Ovary (tissue), 10 donors: ENCODE measurements at regions of chr16 and their contacts with region 1.

Region 1: DNA sequence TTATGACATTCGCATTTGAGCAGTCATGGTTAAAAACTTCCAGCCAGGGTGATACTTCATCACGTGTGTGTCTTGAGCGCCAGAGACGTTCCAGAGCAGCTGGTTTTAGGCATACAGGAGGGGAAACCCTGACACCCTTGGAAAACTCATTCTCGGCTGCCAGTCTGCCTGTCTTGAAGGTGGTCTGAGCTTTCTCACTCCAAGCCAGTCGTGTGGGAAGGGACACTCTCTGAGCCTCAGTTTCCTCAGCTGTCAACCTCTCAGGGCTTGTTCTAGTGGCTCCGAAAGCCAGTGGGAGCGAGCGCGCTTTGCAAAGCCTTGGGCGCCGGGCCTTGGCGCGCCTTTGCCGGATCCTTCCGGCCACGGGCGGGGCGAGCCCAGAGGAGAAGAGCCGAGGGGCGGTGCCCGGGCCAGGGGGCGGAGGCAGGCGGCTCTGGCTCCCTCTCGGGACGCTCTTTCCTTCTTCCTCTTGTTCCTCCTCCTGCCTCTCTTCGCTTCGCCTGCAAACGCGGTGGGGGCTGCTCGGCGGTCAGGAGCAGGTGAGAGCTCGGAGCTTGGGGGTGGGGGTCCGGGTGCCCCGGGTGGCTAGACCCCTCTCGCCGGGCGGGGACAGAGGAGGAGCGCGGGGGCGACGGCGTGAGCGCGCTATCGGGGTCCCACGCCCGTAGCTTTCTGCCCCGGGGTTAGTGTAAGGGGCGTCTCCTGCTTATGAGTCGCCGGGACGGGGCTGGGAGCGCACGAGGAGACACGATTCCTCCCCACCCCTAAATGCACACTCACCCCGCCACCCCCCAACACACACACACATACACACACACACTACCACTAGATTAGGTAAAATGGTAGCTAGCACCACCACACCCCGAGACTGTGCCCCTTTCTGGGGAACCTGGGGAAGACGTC is at the start of gene LDAF1:
- DNase-seq: peak; percentile 81 to 90 (median 83)
- H3K4me3 ChIP-seq: peak within 1 kb of the TSS; percentile 64
- H3K27ac ChIP-seq: peak within 1 kb of the TSS; percentile 64 to 70
- H3K4me1 ChIP-seq: peaks cover 11% of the 10 kb centered on the region
- H3K27me3 ChIP-seq: no peaks in the 10 kb centered on the region
- CTCF ChIP-seq: no peak
- EP300 ChIP-seq: no peak
- POLR2A ChIP-seq: no peak
- total RNA-seq, gene LDAF1: 33.5 to 89.5 (median 67.4) TPM

Region 2: GRCh38 chr16:21277927-21278706 is 119.7 kb after region 1 on chr16 and contains the start of gene CRYM:
- intact Hi-C with region 1: loop called in 1 of 4 experiments (anchors 10 kb)
- DNase-seq: peak; percentile 27 to 72 (median 60)
- H3K4me3 ChIP-seq: peak within 1 kb of the TSS; percentile 19
- H3K27ac ChIP-seq: no peak within 1 kb of the TSS
- H3K4me1 ChIP-seq: peaks cover 3% of the 10 kb centered on the region
- H3K27me3 ChIP-seq: no peaks in the 10 kb centered on the region
- CTCF ChIP-seq: peak; percentile 25 to 59 (median 47)
- EP300 ChIP-seq: no peak
- POLR2A ChIP-seq: no peak
- total RNA-seq, gene CRYM: 0.28 to 6.0 (median 0.90) TPM in 4 of 7 donors, not detected in the others

Region 3: DNA sequence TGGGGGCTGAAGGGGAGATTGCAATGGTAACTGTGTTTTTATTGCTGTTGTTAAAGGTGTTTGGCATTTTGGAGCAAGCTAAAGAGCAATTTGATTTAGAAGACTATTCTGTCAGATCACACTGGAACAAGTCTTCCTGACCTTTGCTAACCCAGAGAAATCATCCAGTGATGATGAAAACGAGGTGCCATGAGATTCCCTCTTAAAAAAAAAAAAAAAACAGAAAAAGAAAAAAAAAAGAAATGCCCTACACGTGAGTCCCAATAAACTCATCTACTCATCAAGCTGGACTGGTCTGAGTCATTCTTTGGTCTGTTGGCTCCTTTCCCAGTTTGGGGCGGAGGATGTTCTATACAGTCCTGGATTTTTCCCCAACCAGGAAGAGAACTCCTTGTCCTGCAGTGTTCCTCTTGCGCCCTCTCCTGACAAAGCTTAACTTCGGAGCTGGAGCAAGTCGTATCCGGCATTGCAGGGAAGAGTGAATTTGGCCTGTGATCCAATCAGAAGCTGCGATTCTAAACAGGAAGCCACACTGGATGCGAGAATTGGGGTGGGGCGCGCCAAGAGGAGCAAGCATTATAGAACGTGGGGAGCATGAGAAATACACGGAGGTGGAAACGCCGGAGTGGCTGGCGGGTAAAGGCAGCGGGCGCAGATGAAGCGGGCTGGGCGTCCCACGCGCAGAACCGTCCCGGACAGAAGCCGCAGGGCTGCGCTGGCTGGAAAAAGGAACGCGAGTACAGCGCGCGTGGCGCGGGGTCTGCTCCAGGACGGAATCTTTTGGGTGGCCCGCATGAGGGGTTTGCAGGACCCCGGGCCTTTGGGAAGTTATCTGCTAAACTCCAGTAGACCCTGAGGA is 142.1 kb after region 1 on chr16:
- intact Hi-C with region 1: loop called (anchors 2 to 5 kb)
- DNase-seq: peak; percentile 88 to 97 (median 96)
- H3K4me3 ChIP-seq: peak overlapping the region; percentile 54
- H3K27ac ChIP-seq: peak overlapping the region; percentile 22 to 60
- H3K4me1 ChIP-seq: no peaks in the 10 kb centered on the region
- H3K27me3 ChIP-seq: no peaks in the 10 kb centered on the region
- CTCF ChIP-seq: peak; percentile 88 to 89 (median 89)
- EP300 ChIP-seq: no peak
- POLR2A ChIP-seq: no peak

Region 4: DNA sequence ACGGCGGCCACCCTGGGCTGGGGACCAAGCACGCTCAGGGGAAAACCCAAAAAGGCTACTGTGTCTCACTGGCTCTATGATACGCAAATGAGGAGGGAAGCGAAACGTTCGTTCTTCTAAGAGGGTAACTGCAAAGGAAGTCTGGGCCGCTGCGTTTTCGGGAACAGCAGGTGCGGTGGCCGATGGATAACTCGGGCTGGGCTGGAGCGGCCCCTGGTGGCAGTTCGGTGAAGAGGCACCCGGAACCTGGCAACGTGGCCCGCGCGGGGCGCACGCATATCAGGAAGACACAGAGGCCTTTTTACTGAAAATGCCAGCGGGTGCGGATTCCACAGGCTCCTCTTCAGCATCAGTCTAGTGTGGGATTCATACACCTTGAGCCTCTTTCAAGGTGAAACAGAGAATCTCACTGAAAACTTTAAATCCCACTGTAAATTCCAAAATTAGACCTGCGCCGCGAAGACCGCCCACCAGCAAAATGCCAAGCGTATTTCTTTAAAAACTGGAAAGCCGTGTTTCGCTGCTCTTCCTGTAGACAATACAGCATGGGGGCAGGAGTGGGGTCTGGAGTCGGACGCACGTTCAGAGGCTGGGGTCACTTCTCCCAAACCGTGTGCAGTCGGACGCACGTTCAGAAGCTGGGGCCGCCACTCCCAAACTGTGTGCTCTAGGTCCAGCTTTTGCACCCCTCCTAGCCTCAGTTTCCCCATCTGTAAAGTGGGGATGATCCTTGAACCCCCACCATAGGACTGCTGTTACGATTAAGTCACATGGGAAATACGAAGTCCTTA is 396.5 kb after region 1 on chr16:
- intact Hi-C with region 1: loop called in 2 of 4 experiments (anchors 10 kb)
- DNase-seq: peak; percentile 77 to 93 (median 86)
- H3K4me3 ChIP-seq: no peak overlapping the region
- H3K27ac ChIP-seq: no peak overlapping the region
- H3K4me1 ChIP-seq: no peaks in the 10 kb centered on the region
- H3K27me3 ChIP-seq: no peaks in the 10 kb centered on the region
- CTCF ChIP-seq: peak; percentile 70 to 98 (median 85)
- EP300 ChIP-seq: no peak
- POLR2A ChIP-seq: peak; percentile 22

Region 5: DNA sequence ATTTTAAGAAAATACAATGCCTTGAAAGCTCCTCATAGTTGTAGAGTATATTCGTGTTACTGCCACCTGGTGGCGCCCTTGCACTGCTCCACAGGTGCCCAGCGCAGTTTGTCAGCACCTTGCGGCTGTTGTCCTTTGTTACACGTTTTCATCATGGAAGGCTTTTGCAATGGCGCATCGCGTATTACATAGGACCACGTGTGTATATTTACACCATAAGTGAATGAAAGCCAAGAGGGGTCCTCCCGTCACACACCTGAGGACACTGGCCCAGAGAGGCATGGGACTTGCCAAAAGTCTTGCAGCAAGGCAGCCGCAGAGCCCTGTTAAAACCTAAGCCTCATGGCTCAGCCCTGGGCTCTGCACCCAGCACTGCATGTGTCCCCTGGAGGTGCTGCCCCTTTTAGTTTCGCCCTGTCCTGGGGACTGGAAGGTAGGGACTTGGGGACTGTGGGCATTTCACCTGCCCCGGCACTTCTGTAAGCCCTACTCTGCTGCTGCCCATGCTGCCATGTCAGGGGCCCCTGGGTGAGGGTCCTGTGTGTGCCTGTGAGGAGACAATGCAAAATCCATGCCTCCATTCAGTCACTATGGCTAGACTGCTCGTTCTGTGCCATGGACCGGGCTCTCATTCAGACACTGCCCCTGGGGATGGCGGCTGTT is 1163.0 kb after region 1 on chr16:
- intact Hi-C with region 1: loop called in 1 of 4 experiments (anchors 10 kb)
- DNase-seq: peak; percentile 58 to 82 (median 68)
- H3K4me3 ChIP-seq: no peak overlapping the region
- H3K27ac ChIP-seq: no peak overlapping the region
- H3K4me1 ChIP-seq: peaks cover 2% of the 10 kb centered on the region
- H3K27me3 ChIP-seq: no peaks in the 10 kb centered on the region
- CTCF ChIP-seq: peak; percentile 77 to 87 (median 86)
- EP300 ChIP-seq: no peak
- POLR2A ChIP-seq: no peak